Activated T-helper 1 cell treated with anti-CD3 and anti-CD28 coated beads, Interleukin-12 subunit alpha, Interleukin-12 subunit beta, Interleukin-2, Interleukin-4 antibody, amounts not matched to agents 30 ng/mL and 10 ng/mL and 1 ng/mL, durations not matched to agents 14 hours and 24 hours and 36 hours (primary cell): ENCODE measurements at regions of chr21 and their contacts with region 1.

Region 1: DNA sequence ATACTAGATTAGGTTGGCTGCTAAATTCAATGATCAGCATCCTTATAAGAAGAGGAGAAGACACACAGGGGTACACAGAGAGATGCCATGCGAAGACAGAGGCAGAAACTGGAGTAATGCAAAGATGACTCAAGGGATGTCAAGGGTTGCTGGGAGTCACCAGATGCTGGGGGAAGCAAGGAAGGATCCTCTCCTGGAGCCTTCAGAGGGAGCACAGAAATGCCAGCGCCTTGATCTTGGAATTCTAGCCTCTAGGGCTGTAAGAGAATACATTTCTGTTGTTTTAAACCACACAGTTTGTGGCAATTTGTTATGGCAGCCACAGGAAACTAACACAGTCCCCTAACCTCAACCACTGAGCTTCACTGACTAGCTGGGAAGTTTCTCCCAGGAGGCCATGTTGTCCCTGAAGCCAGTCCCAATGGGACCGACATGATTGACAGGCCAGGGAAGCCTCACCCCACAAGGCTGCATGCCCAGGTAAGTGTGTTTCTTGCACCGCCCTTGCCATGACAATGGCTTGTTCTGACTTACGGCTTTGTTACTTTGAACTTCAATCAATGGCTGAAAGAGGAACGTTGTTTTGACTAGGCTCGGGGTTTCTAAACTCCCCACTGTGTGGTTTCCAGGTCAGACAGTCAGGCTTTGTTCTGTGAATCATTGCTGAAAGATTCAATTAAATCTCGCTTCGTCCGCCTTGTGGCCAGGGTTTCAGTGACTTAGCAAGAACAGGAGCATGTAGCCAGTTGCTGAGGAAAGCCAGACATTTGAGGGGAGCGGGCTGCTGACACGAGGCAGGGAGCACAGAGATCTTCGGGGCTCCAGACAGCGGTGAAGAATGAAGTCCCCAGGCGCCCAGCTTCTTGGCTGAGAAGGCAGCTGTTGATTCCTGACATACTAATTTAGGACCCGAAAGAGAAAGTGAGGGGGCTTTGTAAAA is 62.3 kb downstream of the RUNX1 start:
- DNase-seq: peak; percentile 70
- H3K4me3 Mint-ChIP-seq: peak overlapping the region; percentile 62
- H3K27ac Mint-ChIP-seq: peak overlapping the region; percentile 97
- H3K4me1 Mint-ChIP-seq: peaks cover 92% of the 10 kb centered on the region
- H3K27me3 Mint-ChIP-seq: no peaks in the 10 kb centered on the region

Region 2: GRCh38 chr21:34946916-34947534 is 39.8 kb before region 1 on chr21:
- intact Hi-C with region 1: loop called (anchors 1 kb)
- DNase-seq: no peak
- H3K4me3 Mint-ChIP-seq: no peak overlapping the region
- H3K27ac Mint-ChIP-seq: peak overlapping the region; percentile 90
- H3K4me1 Mint-ChIP-seq: peaks cover 62% of the 10 kb centered on the region
- H3K27me3 Mint-ChIP-seq: no peaks in the 10 kb centered on the region

Region 3: GRCh38 chr21:35014302-35015041 is 27.6 kb after region 1 on chr21:
- intact Hi-C with region 1: loop called (anchors 1 kb)
- DNase-seq: no peak
- H3K4me3 Mint-ChIP-seq: peak overlapping the region; percentile 35
- H3K27ac Mint-ChIP-seq: no peak overlapping the region
- H3K4me1 Mint-ChIP-seq: peaks cover 77% of the 10 kb centered on the region
- H3K27me3 Mint-ChIP-seq: no peaks in the 10 kb centered on the region

Region 4: DNA sequence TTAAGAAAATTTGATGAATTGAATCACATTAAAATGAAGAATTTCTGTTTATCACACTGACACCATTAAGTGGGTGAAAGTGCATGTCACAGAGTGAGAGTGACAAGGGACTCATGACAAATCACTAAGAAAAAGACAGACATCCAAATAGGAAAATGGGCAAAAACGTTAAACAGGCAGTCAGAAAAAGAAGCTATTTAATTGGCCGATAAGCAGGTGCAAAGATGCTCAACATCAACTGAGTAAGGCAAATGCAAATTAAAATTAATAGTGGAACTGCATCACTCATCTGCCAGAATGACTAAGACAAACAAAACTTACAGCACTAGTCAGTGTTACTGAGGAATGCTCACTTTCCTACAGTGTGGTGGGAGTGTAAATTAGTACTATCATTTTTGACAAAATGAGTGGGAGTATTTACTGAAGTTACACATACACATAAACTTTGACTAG is 101.5 kb after region 1 on chr21:
- intact Hi-C with region 1: loop called (anchors 1 kb)
- DNase-seq: no peak
- H3K4me3 Mint-ChIP-seq: no peak overlapping the region
- H3K27ac Mint-ChIP-seq: peak overlapping the region; percentile 89
- H3K4me1 Mint-ChIP-seq: peaks cover 36% of the 10 kb centered on the region
- H3K27me3 Mint-ChIP-seq: no peaks in the 10 kb centered on the region

Region 5: DNA sequence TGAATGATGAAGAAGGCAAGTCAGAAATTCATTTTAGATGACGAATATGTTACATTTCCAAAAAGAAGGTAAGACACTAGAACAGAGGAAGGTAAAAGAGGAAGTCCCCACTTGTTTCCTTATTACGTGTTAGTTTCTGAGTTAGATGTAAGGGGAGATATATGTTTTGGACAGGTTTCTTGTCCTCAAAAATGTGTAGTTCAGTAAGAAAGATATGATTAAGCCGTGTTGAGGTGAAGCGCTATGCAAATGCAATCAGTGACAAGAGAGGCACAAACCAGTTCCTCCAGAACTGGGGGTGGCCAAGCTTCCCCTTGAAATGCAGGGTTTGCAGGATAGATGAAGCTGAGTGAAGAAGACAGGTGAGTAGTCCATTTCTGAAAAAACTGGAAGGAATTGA is 355.6 kb after region 1 on chr21:
- intact Hi-C with region 1: loop called (anchors 2 kb)
- DNase-seq: no peak
- H3K4me3 Mint-ChIP-seq: peak overlapping the region; percentile 75
- H3K27ac Mint-ChIP-seq: peak overlapping the region; percentile 99
- H3K4me1 Mint-ChIP-seq: peaks cover 51% of the 10 kb centered on the region
- H3K27me3 Mint-ChIP-seq: no peaks in the 10 kb centered on the region